Naive thymus-derived CD4-positive, alpha-beta T cell (primary cell): ENCODE measurements at regions of chr2 and their contacts with region 1.

Region 1: DNA sequence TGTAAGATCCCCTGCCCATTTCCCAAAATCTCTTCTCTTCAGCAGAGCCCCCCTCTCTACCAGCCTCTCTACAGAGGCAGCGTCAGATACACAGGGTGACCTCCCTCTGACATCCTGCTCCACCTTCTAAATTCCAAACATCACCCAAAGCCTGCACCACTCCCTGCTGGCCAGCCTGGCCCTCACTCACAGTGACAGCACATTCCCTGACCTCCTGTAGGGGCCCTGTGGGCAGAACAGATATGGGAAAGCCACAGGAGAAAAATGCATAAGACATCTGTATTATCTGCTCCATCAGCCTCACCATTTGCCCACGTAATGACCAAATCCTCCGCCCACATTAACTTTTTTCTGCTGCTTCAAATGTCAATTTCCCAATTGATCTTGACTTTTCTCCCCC is 40.6 kb downstream of the TRABD2A start:
- DNase-seq: no peak
- ATAC-seq: peak; percentile 28
- H3K4me3 ChIP-seq: peak overlapping the region; percentile 43
- H3K4me3 Mint-ChIP-seq: peak overlapping the region; percentile 75 to 90 (median 82)
- H3K27ac ChIP-seq: peak overlapping the region; percentile 80
- H3K27ac Mint-ChIP-seq: peak overlapping the region in 8 of 9 donors; percentile 78 to 99 (median 96)
- H3K4me1 ChIP-seq: peaks cover 71 to 95% of the 10 kb centered on the region in 2 donors
- H3K4me1 Mint-ChIP-seq: peaks cover 49 to 97% (median 88%) of the 10 kb centered on the region in 7 donors
- H3K27me3 ChIP-seq: no peaks in the 10 kb centered on the region
- H3K27me3 Mint-ChIP-seq: no peaks in the 10 kb centered on the region

Region 2: GRCh38 chr2:84017010-84017409 is 823.3 kb before region 1 on chr2:
- CTCF ChIA-PET with region 1: no interaction called
- POLR2A ChIA-PET with region 1: no interaction called
- intact Hi-C with region 1: no loop called
- DNase-seq: no peak
- ATAC-seq: no peak
- H3K4me3 ChIP-seq: no peak overlapping the region
- H3K4me3 Mint-ChIP-seq: no peak overlapping the region
- H3K27ac ChIP-seq: no peak overlapping the region
- H3K27ac Mint-ChIP-seq: no peak overlapping the region
- H3K4me1 ChIP-seq: no peaks in the 10 kb centered on the region
- H3K4me1 Mint-ChIP-seq: no peaks in the 10 kb centered on the region
- H3K27me3 ChIP-seq: no peaks in the 10 kb centered on the region
- H3K27me3 Mint-ChIP-seq: peaks cover 0 to 10% (median 4%) of the 10 kb centered on the region in 5 donors

Region 3: GRCh38 chr2:84713441-84713840 is 126.9 kb before region 1 on chr2:
- CTCF ChIA-PET with region 1: no interaction called
- POLR2A ChIA-PET with region 1: no interaction called
- intact Hi-C with region 1: no loop called
- DNase-seq: no peak
- ATAC-seq: no peak
- H3K4me3 ChIP-seq: no peak overlapping the region
- H3K4me3 Mint-ChIP-seq: no peak overlapping the region
- H3K27ac ChIP-seq: no peak overlapping the region
- H3K27ac Mint-ChIP-seq: peak overlapping the region in 1 of 9 donors; percentile 33
- H3K4me1 ChIP-seq: peaks cover 0 to 18% of the 10 kb centered on the region in 2 donors
- H3K4me1 Mint-ChIP-seq: peaks cover 6 to 73% (median 56%) of the 10 kb centered on the region in 7 donors
- H3K27me3 ChIP-seq: no peaks in the 10 kb centered on the region
- H3K27me3 Mint-ChIP-seq: no peaks in the 10 kb centered on the region

Region 4: GRCh38 chr2:84823788-84824187 is 16.5 kb before region 1 on chr2:
- CTCF ChIA-PET with region 1: interaction called, 5 read pairs
- POLR2A ChIA-PET with region 1: interaction called, 49 read pairs
- intact Hi-C with region 1: loop called in 1 of 2 experiments (anchors 1 kb)
- DNase-seq: no peak
- ATAC-seq: no peak
- H3K4me3 ChIP-seq: no peak overlapping the region
- H3K4me3 Mint-ChIP-seq: peak overlapping the region in 1 of 10 donors; percentile 18
- H3K27ac ChIP-seq: no peak overlapping the region
- H3K27ac Mint-ChIP-seq: peak overlapping the region in 7 of 9 donors; percentile 25 to 92 (median 81)
- H3K4me1 ChIP-seq: peaks cover 13 to 50% of the 10 kb centered on the region in 2 donors
- H3K4me1 Mint-ChIP-seq: peaks cover under 1 to 63% (median 38%) of the 10 kb centered on the region in 7 donors
- H3K27me3 ChIP-seq: no peaks in the 10 kb centered on the region
- H3K27me3 Mint-ChIP-seq: no peaks in the 10 kb centered on the region